Dendritic cell treated with granulocyte-macrophage colony-stimulating factor and Interleukin-4, amounts not matched to agents 40 ng/mL and 50 ng/mL, for 4 days (primary cell): ENCODE measurements at regions of chr13 and their contacts with region 1.

Region 1: GRCh38 chr13:53151336-53152056 is 122.9 kb downstream of the OLFM4 start:
- H3K4me3 Mint-ChIP-seq: no peak overlapping the region
- H3K27ac Mint-ChIP-seq: no peak overlapping the region
- H3K4me1 Mint-ChIP-seq: no peaks in the 10 kb centered on the region
- H3K27me3 Mint-ChIP-seq: peaks cover 6% of the 10 kb centered on the region

Region 2: GRCh38 chr13:52862358-52863206 is 288.9 kb before region 1 on chr13:
- intact Hi-C with region 1: loop called (anchors 10 kb)
- H3K4me3 Mint-ChIP-seq: no peak overlapping the region
- H3K27ac Mint-ChIP-seq: no peak overlapping the region
- H3K4me1 Mint-ChIP-seq: no peaks in the 10 kb centered on the region
- H3K27me3 Mint-ChIP-seq: peaks cover 10% of the 10 kb centered on the region